OCI-LY7 (cell line): ENCODE measurements at regions of chr3 and their contacts with region 1.

Region 1: GRCh38 chr3:53195602-53196574 is 34.9 kb downstream of the PRKCD start:
- DNase-seq: peak; percentile 83
- H3K4me3 ChIP-seq: peak overlapping the region; percentile 71
- H3K27ac ChIP-seq: peak overlapping the region; percentile 92
- H3K4me1 ChIP-seq: peaks cover 82% of the 10 kb centered on the region
- CTCF ChIP-seq: peak; percentile 99

Region 2: DNA sequence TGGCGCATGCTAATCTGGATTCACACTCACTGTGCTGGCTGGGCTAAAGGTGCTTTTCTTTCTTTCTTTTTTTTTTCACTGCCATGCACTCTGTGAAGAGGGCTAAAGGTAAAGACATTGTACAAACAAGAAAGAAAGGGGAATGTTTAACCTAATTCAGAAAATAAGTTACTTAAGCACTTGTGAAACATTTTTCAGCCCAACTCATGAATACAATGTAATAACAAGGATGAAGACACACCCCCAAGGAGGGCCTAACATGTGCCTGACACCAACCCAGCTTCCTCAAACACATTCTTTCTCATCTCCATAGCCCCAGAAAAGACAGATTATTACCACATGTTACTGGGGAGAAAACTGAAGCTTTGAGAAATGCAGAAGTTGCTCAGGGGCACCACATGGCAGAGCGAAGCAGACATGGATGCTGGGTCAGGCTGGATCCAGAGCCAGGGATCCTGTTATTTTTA is 304.2 kb before region 1 on chr3:
- CTCF ChIA-PET with region 1: no interaction called
- POLR2A ChIA-PET with region 1: no interaction called
- intact Hi-C with region 1: no loop called
- DNase-seq: no peak
- H3K4me3 ChIP-seq: no peak overlapping the region
- H3K27ac ChIP-seq: no peak overlapping the region
- H3K4me1 ChIP-seq: peaks cover 12% of the 10 kb centered on the region
- CTCF ChIP-seq: no peak

Region 3: GRCh38 chr3:53114011-53114400 is 81.9 kb before region 1 on chr3:
- CTCF ChIA-PET with region 1: interaction called, 10 read pairs
- POLR2A ChIA-PET with region 1: interaction called, 4 read pairs
- intact Hi-C with region 1: loop called (anchors 1 kb)
- DNase-seq: peak; percentile 84
- H3K4me3 ChIP-seq: no peak overlapping the region
- H3K27ac ChIP-seq: no peak overlapping the region
- H3K4me1 ChIP-seq: peaks cover 3% of the 10 kb centered on the region
- CTCF ChIP-seq: peak; percentile 96

Region 4: DNA sequence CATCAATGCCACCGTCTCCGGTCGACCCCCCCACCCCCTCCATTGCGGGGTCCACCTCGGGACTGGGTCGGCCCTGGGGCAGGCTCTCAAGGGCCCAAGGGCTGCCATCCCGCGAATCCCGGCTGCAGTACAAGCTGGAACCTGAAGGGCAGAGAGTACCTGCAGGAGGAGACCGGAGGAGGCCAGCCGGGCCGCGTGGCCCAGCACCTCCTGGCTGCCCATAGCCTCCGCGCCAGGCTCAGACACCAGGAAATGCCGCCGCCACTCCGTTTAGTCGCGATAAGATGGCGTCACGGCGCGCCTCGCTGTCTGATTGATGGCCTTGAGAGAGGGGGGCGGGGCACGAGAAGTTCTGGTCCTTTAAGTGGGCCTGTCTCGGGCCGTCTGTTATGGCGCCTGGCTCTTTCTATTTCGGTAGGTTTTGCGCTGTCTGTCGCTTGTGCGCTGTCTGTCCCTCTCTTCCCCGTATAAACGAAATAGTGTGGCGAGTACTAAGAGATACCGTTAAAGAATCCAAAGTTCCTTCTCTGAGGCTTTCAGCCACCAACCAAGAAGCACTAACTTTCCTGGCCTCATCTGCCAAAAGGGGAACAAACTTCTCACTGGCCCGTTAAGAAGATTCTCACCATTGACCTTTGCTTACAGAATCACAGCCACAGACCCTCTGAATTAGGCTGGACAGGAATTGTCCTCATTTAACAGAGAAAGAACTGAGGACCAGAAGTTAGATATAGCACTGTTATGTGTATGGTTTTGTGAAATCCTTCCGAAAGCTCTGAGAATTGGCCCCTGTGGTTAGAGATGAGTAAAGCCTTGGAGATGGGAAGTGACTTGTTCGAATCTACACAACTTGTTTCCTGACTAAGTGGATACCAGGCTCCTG is 65.5 kb before region 1 on chr3 and contains the start of gene RFT1:
- CTCF ChIA-PET with region 1: interaction called, 9 read pairs
- POLR2A ChIA-PET with region 1: interaction called, 19 read pairs
- intact Hi-C with region 1: loop called (anchors 1 kb)
- DNase-seq: peak; percentile 97
- H3K4me3 ChIP-seq: peak within 1 kb of the TSS; percentile 96
- H3K27ac ChIP-seq: peak within 1 kb of the TSS; percentile 65
- H3K4me1 ChIP-seq: peaks cover 35% of the 10 kb centered on the region
- CTCF ChIP-seq: no peak
- total RNA-seq, gene RFT1: 9.9 and 15.8 TPM in 2 replicates

Region 5: DNA sequence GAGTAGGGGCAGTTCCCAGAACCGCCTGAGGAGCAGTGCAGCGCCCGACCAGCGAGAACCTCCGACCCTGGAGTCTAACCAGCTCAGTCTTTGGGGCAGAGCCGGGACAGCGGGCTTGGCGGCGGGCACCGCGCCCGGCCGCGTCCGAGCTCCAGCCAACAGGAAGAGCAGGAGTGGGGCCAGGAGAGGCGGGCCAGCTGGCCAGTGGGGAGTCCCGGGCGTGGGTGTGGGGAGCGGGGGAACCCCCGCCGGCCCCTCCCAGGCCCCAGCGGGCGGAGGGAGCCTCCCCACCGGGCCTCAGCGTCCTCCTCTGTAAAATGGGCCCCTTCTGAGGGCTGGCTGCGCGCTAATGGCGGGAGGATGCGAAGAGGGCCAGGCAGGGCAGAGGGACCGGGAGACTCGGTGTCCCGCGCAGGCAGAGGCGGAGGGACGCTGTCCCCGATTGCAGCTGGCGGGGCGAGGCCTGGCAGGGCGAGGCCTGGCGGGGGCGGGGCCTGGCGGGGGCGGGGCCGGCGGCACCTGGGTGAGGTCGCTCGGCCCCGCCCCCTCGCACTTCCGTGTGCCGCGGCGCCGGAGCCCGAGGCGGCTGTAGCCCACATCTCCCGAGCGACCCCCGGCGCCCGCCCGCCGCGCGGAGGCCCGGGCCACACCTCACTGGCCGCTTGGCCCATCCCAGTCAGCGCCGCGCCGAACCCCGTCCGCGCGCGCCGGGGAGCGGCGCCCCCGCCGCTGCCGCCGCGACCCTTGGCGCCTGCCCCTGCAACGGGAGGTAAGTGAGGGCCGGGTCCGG is 35.0 kb before region 1 on chr3 and contains the start of gene PRKCD:
- CTCF ChIA-PET with region 1: interaction called, 4 read pairs
- POLR2A ChIA-PET with region 1: interaction called, 10 read pairs
- intact Hi-C with region 1: loop called (anchors 1 kb)
- DNase-seq: peak; percentile 89
- H3K4me3 ChIP-seq: peak within 1 kb of the TSS; percentile 96
- H3K27ac ChIP-seq: peak within 1 kb of the TSS; percentile 94
- H3K4me1 ChIP-seq: peaks cover 73% of the 10 kb centered on the region
- CTCF ChIP-seq: peak; percentile 63
- total RNA-seq, gene PRKCD: 9.5 and 13.3 TPM in 2 replicates

Region 6: GRCh38 chr3:53170325-53171063 is 25.4 kb before region 1 on chr3:
- CTCF ChIA-PET with region 1: interaction called, 11 read pairs
- POLR2A ChIA-PET with region 1: interaction called, 15 read pairs
- intact Hi-C with region 1: loop called (anchors 1 kb)
- DNase-seq: peak; percentile 67
- H3K4me3 ChIP-seq: peak overlapping the region; percentile 53
- H3K27ac ChIP-seq: peak overlapping the region; percentile 94
- H3K4me1 ChIP-seq: peaks cover 100% of the 10 kb centered on the region
- CTCF ChIP-seq: no peak

Region 7: GRCh38 chr3:53180305-53181023 is 15.4 kb before region 1 on chr3:
- CTCF ChIA-PET with region 1: interaction called, 7 read pairs
- POLR2A ChIA-PET with region 1: interaction called, 24 read pairs
- intact Hi-C with region 1: loop called (anchors 1 kb)
- DNase-seq: peak; percentile 86
- H3K4me3 ChIP-seq: peak overlapping the region; percentile 44
- H3K27ac ChIP-seq: peak overlapping the region; percentile 87
- H3K4me1 ChIP-seq: peaks cover 63% of the 10 kb centered on the region
- CTCF ChIP-seq: no peak

Region 8: GRCh38 chr3:53347261-53348064 is 151.6 kb after region 1 on chr3 and contains the start of gene DCP1A:
- CTCF ChIA-PET with region 1: no interaction called
- POLR2A ChIA-PET with region 1: no interaction called
- intact Hi-C with region 1: no loop called
- DNase-seq: peak; percentile 98
- H3K4me3 ChIP-seq: peak within 1 kb of the TSS; percentile 97
- H3K27ac ChIP-seq: peak within 1 kb of the TSS; percentile 53
- H3K4me1 ChIP-seq: peaks cover 19% of the 10 kb centered on the region
- CTCF ChIP-seq: no peak
- total RNA-seq, gene DCP1A: 21.8 and 23.8 TPM in 2 replicates